Ovary (tissue), 10 donors: ENCODE measurements at regions of chr10 and their contacts with region 1.

Region 1: DNA sequence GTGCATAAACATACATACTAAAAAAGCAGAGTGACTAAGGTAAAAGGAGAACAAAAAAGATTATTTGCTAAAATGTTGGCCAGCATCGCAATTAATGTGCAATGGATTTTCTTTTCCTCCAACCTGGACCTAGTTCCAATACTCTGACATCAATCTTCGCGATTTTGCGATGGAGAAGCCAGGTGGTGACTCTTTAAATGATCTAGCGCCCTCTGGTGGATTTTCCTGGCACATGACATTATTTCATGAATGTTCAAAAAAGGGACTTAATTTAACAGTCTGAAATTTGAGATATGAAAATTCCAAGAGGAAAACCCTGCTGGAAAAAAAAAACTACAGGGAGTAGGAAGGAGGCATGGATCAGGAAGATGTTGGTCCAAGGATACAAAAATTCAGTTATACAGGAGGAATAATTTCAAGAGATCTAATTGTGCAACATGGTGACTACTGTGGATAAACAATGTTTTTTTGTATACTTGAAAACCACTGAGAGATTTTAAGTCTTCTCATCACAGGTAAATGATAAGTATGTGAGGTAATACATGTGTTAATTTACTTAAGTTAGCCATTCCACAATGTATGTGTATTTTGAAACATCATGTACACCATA is 4.3 kb upstream of the KCNMA1 start:
- DNase-seq: peak in 4 of 5 donors; percentile 42 to 72 (median 60)
- H3K4me3 ChIP-seq: no peak overlapping the region
- H3K27ac ChIP-seq: no peak overlapping the region
- H3K4me1 ChIP-seq: peaks cover 3% of the 10 kb centered on the region
- H3K27me3 ChIP-seq: no peaks in the 10 kb centered on the region
- CTCF ChIP-seq: peak; percentile 61 to 87 (median 80)
- EP300 ChIP-seq: no peak
- POLR2A ChIP-seq: no peak

Region 2: GRCh38 chr10:77139252-77140160 is 502.4 kb before region 1 on chr10:
- intact Hi-C with region 1: no loop called
- DNase-seq: no peak
- H3K4me3 ChIP-seq: no peak overlapping the region
- H3K27ac ChIP-seq: no peak overlapping the region
- H3K4me1 ChIP-seq: no peaks in the 10 kb centered on the region
- H3K27me3 ChIP-seq: no peaks in the 10 kb centered on the region
- CTCF ChIP-seq: no peak
- EP300 ChIP-seq: no peak
- POLR2A ChIP-seq: no peak

Region 3: DNA sequence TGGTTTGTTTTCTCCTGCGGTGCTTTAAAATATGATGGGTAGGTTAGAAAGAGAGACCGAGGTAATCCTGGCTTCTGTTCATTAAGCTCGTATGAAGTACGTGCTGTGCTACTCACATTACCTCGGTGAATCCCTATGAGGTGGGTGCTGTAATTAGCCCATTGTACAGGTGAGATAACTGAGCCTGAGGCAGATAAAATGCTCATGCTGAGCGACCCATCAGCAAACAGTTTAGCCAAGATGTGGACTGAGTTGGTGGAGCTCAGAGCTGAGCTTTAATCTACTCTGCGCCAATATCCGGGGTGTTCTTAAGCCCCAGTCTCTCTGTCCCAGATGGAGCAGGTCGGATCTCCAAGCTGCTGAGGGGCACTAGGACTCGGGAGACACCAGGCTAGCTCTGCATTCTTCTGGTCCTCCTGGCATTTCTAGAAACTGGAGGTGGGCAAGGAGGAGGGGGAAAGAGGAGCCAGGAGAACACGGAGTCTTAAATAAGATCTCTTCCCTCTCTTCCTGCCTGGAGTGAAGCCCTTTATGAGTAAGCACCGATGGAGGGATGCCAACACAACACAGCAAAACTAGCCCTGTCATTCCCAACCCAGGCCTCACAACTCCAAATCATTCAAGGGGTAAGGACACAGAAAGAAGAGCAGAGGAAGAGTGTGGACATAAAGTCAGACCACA is 462.7 kb before region 1 on chr10:
- intact Hi-C with region 1: loop called in 3 of 4 experiments (anchors 2 to 5 kb)
- DNase-seq: peak; percentile 61 to 74 (median 66)
- H3K4me3 ChIP-seq: no peak overlapping the region
- H3K27ac ChIP-seq: no peak overlapping the region
- H3K4me1 ChIP-seq: peaks cover 1% of the 10 kb centered on the region
- H3K27me3 ChIP-seq: no peaks in the 10 kb centered on the region
- CTCF ChIP-seq: no peak
- EP300 ChIP-seq: no peak
- POLR2A ChIP-seq: no peak

Region 4: DNA sequence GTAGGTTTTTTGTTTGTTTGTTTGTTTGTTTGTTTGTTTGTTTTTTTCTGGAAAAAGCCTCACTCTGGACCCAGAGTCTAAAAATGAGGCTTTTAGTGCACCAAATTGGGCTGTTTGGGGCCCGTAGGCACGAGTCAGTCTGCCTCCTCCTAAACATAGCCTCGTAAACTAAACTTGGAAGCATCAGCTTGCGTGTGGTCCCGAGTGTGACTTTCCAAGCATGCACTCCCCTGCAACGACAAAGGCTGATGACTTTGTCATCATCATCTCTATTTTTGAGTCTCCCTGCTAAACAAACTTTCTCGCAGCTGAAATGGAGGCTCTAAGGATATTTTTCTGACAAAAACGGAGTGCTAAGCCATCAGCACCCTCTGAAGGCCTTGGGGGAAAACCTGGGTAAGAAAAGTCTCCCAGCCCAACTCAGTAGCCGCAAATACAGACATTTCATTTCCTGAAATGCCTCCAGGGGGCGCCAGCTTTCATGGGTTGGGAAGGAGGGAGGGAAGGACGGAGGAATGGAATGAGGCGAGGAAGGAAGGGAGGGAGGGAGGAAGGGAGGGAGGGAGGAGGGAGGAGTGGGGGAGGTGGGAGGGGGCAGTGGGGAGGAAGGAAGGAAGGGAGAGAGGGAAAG is 250.2 kb before region 1 on chr10:
- intact Hi-C with region 1: loop called (anchors 5 to 10 kb)
- DNase-seq: peak; percentile 75 to 86 (median 77)
- H3K4me3 ChIP-seq: no peak overlapping the region
- H3K27ac ChIP-seq: no peak overlapping the region
- H3K4me1 ChIP-seq: peaks cover 19% of the 10 kb centered on the region
- H3K27me3 ChIP-seq: no peaks in the 10 kb centered on the region
- CTCF ChIP-seq: peak in 1 of 3 donors; percentile 36
- EP300 ChIP-seq: no peak
- POLR2A ChIP-seq: no peak

Region 5: DNA sequence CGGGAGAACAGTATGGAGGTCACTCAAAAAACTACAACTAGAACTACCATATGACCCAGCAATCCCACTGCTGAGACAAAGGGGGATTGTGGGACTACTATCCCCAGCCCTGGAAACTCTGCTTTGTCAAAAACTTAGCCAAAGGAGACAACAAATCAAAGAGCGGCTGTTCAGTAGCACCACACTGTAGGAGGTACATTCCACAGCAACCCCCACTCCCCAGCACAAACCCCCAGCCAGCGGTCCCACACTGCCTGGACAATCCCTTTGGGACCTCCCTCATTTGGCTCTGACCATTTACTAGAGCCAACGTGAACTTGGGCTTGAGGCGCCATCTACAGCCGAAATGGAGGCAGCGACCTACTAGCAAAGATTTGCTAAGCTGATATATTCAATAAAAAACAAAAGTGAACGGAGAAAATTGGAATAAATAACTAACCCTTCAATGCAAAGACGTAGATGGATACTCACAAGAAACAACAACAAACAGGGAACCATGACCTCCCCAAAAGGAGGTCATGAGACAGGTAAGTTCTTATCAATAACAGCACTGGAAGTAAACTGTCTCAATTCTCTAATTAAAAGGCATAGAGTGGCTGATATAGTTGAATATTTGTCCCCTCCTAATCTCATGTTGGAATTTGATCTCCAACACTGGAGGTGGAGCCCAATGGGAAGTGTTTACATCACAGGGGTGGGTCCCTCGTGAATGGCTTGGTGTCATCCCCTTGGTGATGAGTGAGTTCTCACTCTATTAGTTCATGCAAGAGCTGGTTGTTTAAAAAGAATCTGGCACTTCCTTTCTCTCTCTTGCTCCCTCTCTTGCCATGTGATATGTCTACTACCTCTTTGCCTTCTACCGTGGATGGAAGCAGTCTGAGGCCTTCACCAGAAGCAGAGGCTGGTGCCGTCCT is 114.7 kb after region 1 on chr10:
- intact Hi-C with region 1: no loop called
- DNase-seq: peak in 1 of 5 donors; percentile 42
- H3K4me3 ChIP-seq: no peak overlapping the region
- H3K27ac ChIP-seq: no peak overlapping the region
- H3K4me1 ChIP-seq: no peaks in the 10 kb centered on the region
- H3K27me3 ChIP-seq: no peaks in the 10 kb centered on the region
- CTCF ChIP-seq: no peak
- EP300 ChIP-seq: no peak
- POLR2A ChIP-seq: no peak